CD8-positive, alpha-beta memory T cell (primary cell): ENCODE measurements at regions of chr3 and their contacts with region 1.

Region 1: DNA sequence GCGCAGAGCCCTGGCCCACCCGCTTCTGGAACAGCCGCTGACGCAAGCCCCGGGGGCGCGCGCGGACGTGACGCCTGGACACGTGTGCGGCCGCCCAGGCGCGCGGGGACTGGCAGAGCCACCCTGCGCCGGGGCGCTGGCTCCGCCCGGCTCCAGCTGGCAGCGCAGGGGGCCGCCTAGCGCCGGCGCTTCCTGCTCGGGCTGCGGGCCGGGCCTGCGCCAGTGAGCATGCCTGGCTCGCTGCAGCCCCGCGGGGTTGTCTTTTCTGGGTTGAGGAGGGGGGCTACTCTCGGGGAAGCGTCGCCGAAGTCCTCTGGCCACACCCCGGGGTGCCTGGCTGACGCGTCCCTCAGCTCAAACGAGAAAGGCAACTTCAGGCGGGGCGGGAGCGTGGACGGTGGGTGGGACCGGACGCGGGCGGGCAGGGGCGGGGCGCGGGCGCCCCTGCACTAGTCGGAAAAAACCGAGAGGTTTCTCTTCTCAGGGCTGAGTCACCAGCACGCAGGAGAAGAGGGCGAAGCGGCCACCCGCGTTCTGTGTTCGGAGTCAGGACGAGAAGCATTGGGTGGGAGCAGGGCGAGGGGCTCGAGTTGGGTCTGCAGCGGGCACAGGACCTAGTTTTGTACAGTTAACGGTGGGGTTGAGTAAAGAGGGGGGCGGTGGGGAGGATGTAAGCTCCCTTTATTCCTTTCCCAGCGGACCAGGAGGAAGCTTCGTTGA is at the start of gene SIAH2:
- DNase-seq: peak; percentile 88 to 96 (median 95)
- H3K4me3 ChIP-seq: peak within 1 kb of the TSS; percentile 92
- H3K4me3 Mint-ChIP-seq: peak within 1 kb of the TSS; percentile 94 to 100 (median 97)
- H3K27ac ChIP-seq: peak within 1 kb of the TSS; percentile 95
- H3K27ac Mint-ChIP-seq: peak within 1 kb of the TSS; percentile 98 to 100 (median 100)
- H3K4me1 ChIP-seq: peaks cover 28% of the 10 kb centered on the region
- H3K4me1 Mint-ChIP-seq: peaks cover 39 to 49% (median 48%) of the 10 kb centered on the region in 3 donors
- H3K27me3 ChIP-seq: no peaks in the 10 kb centered on the region
- H3K27me3 Mint-ChIP-seq: peaks cover 0 to 2% of the 10 kb centered on the region in 2 donors
- total RNA-seq, gene SIAH2: 111 to 115 TPM

Region 2: GRCh38 chr3:150408221-150409102 is 354.8 kb before region 1 on chr3 and contains the start of gene TSC22D2:
- CTCF ChIA-PET with region 1: interaction called, 3 read pairs
- POLR2A ChIA-PET with region 1: interaction called, 23 read pairs
- DNase-seq: peak; percentile 94 to 98 (median 97)
- H3K4me3 ChIP-seq: peak within 1 kb of the TSS; percentile 94
- H3K4me3 Mint-ChIP-seq: peak within 1 kb of the TSS; percentile 86 to 100 (median 97)
- H3K27ac ChIP-seq: peak within 1 kb of the TSS; percentile 91
- H3K27ac Mint-ChIP-seq: peak within 1 kb of the TSS; percentile 86 to 100 (median 98)
- H3K4me1 ChIP-seq: peaks cover 28% of the 10 kb centered on the region
- H3K4me1 Mint-ChIP-seq: peaks cover 35 to 40% (median 38%) of the 10 kb centered on the region in 3 donors
- H3K27me3 ChIP-seq: no peaks in the 10 kb centered on the region
- H3K27me3 Mint-ChIP-seq: peaks cover 0 to 2% of the 10 kb centered on the region in 2 donors
- total RNA-seq, gene TSC22D2: 20.9 to 22.3 TPM

Region 3: GRCh38 chr3:150546226-150547044 is 216.8 kb before region 1 on chr3 and contains the starts of genes EIF2A and SERP1:
- CTCF ChIA-PET with region 1: interaction called, 8 read pairs
- POLR2A ChIA-PET with region 1: interaction called, 65 read pairs
- DNase-seq: peak; percentile 99 to 100 (median 99)
- H3K4me3 ChIP-seq: peak within 1 kb of the TSS; percentile 89
- H3K4me3 Mint-ChIP-seq: peak within 1 kb of the TSS; percentile 92 to 100 (median 97)
- H3K27ac ChIP-seq: peak within 1 kb of the TSS; percentile 88
- H3K27ac Mint-ChIP-seq: peak within 1 kb of the TSS; percentile 98 to 100 (median 99)
- H3K4me1 ChIP-seq: peaks cover 41% of the 10 kb centered on the region
- H3K4me1 Mint-ChIP-seq: peaks cover 61 to 82% (median 80%) of the 10 kb centered on the region in 3 donors
- H3K27me3 ChIP-seq: no peaks in the 10 kb centered on the region
- H3K27me3 Mint-ChIP-seq: no peaks in the 10 kb centered on the region
- total RNA-seq, gene EIF2A: 128 to 131 TPM
- total RNA-seq, gene SERP1: 127 to 135 TPM

Region 4: GRCh38 chr3:150603153-150603979 is 159.9 kb before region 1 on chr3 and contains the start of gene SELENOT:
- CTCF ChIA-PET with region 1: interaction called, 7 read pairs
- POLR2A ChIA-PET with region 1: interaction called, 29 read pairs
- DNase-seq: peak; percentile 91 to 97 (median 96)
- H3K4me3 ChIP-seq: peak within 1 kb of the TSS; percentile 89
- H3K4me3 Mint-ChIP-seq: peak within 1 kb of the TSS; percentile 93 to 99 (median 98)
- H3K27ac ChIP-seq: peak within 1 kb of the TSS; percentile 92
- H3K27ac Mint-ChIP-seq: peak within 1 kb of the TSS; percentile 96 to 100 (median 99)
- H3K4me1 ChIP-seq: peaks cover 51% of the 10 kb centered on the region
- H3K4me1 Mint-ChIP-seq: peaks cover 57 to 82% (median 78%) of the 10 kb centered on the region in 3 donors
- H3K27me3 ChIP-seq: no peaks in the 10 kb centered on the region
- H3K27me3 Mint-ChIP-seq: peaks cover 0 to 7% of the 10 kb centered on the region in 2 donors
- total RNA-seq, gene SELENOT: 158 to 162 TPM

Region 5: GRCh38 chr3:150703299-150704134 is 59.8 kb before region 1 on chr3 and contains the start of gene ERICH6:
- CTCF ChIA-PET with region 1: interaction called, 10 read pairs
- POLR2A ChIA-PET with region 1: interaction called, 60 read pairs
- DNase-seq: peak; percentile 61 to 86 (median 80)
- H3K4me3 ChIP-seq: peak within 1 kb of the TSS; percentile 86
- H3K4me3 Mint-ChIP-seq: peak within 1 kb of the TSS; percentile 91 to 99 (median 97)
- H3K27ac ChIP-seq: peak within 1 kb of the TSS; percentile 91
- H3K27ac Mint-ChIP-seq: peak within 1 kb of the TSS; percentile 82 to 99 (median 98)
- H3K4me1 ChIP-seq: peaks cover 10% of the 10 kb centered on the region
- H3K4me1 Mint-ChIP-seq: peaks cover 19 to 33% (median 20%) of the 10 kb centered on the region in 3 donors
- H3K27me3 ChIP-seq: no peaks in the 10 kb centered on the region
- H3K27me3 Mint-ChIP-seq: peaks cover 0 to 11% of the 10 kb centered on the region in 2 donors
- total RNA-seq, gene ERICH6: 0.39 TPM in 1 of 2 experiments, not detected in the other

Region 6: GRCh38 chr3:150721285-150722130 is 41.8 kb before region 1 on chr3:
- CTCF ChIA-PET with region 1: interaction called, 13 read pairs
- POLR2A ChIA-PET with region 1: no interaction called
- DNase-seq: peak in 2 of 5 donors; percentile 51 to 65
- H3K4me3 ChIP-seq: no peak overlapping the region
- H3K4me3 Mint-ChIP-seq: no peak overlapping the region
- H3K27ac ChIP-seq: no peak overlapping the region
- H3K27ac Mint-ChIP-seq: peak overlapping the region in 3 of 8 donors; percentile 0 to 37 (median 0)
- H3K4me1 ChIP-seq: no peaks in the 10 kb centered on the region
- H3K4me1 Mint-ChIP-seq: peaks cover 0 to 14% (median 10%) of the 10 kb centered on the region in 3 donors
- H3K27me3 ChIP-seq: no peaks in the 10 kb centered on the region
- H3K27me3 Mint-ChIP-seq: peaks cover 0 to 1% of the 10 kb centered on the region in 2 donors

Region 7: DNA sequence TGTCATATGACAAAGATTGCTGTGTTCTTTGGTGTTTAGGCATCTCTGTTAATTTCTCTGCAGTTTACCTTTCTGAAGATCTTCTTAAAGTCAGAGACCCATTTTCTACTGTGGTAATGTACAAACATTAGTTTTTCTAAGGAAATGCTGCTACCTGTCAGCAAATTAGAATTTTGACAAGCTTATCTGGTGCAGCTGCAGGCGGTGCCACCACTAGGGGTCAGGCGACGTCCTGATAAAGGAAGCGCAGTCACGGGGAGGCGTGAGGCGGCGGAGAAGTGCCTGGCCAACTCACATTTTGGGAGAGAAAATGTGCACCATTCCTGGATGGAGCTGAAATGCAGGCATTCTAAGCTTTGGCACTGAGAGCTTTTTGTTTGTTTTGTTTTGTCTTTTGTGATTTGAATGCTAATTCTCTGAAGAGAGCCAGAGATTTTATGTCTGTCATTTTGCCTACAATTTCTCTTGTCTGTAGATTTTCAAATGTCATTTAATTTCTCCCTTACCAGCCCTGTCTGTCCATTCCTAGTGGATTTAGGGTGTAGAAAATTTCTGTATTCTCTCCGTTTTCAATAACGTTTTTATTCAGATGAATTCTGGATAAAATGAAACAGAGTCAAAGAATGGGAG is 24.6 kb after region 1 on chr3:
- CTCF ChIA-PET with region 1: interaction called, 26 read pairs
- POLR2A ChIA-PET with region 1: interaction called, 8 read pairs
- DNase-seq: peak; percentile 57 to 81 (median 68)
- H3K4me3 ChIP-seq: no peak overlapping the region
- H3K4me3 Mint-ChIP-seq: peak overlapping the region in 1 of 7 donors; percentile 30
- H3K27ac ChIP-seq: no peak overlapping the region
- H3K27ac Mint-ChIP-seq: peak overlapping the region in 1 of 8 donors; percentile 4
- H3K4me1 ChIP-seq: no peaks in the 10 kb centered on the region
- H3K4me1 Mint-ChIP-seq: peaks cover 0 to 7% (median 6%) of the 10 kb centered on the region in 3 donors
- H3K27me3 ChIP-seq: no peaks in the 10 kb centered on the region
- H3K27me3 Mint-ChIP-seq: peaks cover 3 to 10% of the 10 kb centered on the region in 2 donors